Naive thymus-derived CD4-positive, alpha-beta T cell (primary cell): ENCODE measurements at regions of chrX and their contacts with region 1.

Region 1: DNA sequence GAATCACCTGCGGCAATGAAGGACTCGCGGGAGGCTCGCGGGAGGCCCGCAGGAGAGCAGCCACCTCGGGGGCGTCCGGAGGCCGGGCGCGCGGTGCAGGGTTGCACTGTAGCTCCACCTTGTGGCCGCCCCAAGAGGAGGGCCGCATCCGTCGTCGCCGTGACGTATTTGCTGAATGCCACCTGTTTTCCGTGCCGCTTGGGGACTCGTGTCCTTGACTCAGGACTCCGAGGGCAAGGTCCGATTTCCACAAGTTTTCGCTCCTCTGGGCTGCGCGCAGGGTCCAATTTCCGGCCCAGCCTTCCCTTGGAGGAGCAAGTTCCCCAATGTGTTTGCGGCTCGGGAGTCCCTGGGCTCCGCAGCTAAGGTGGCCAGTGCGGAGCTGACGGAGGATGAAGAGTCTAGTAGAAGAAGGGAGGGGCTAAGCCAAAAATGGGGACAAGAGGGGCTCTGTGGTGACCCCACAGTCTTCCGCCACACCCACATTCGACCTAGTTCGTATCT is 10.7 kb upstream of the DLG3 start:
- DNase-seq: peak; percentile 49 to 77 (median 73)
- ATAC-seq: peak; percentile 95
- H3K4me3 ChIP-seq: peak overlapping the region; percentile 79
- H3K4me3 Mint-ChIP-seq: peak overlapping the region; percentile 84 to 94 (median 90)
- H3K27ac ChIP-seq: peak overlapping the region; percentile 41
- H3K27ac Mint-ChIP-seq: peak overlapping the region; percentile 71 to 94 (median 89)
- H3K4me1 ChIP-seq: peaks cover 0 to 3% of the 10 kb centered on the region in 2 donors
- H3K4me1 Mint-ChIP-seq: peaks cover 0 to 24% (median 9%) of the 10 kb centered on the region in 7 donors
- H3K27me3 ChIP-seq: no peaks in the 10 kb centered on the region
- H3K27me3 Mint-ChIP-seq: peaks cover 0 to 18% (median 8%) of the 10 kb centered on the region in 5 donors

Region 2: DNA sequence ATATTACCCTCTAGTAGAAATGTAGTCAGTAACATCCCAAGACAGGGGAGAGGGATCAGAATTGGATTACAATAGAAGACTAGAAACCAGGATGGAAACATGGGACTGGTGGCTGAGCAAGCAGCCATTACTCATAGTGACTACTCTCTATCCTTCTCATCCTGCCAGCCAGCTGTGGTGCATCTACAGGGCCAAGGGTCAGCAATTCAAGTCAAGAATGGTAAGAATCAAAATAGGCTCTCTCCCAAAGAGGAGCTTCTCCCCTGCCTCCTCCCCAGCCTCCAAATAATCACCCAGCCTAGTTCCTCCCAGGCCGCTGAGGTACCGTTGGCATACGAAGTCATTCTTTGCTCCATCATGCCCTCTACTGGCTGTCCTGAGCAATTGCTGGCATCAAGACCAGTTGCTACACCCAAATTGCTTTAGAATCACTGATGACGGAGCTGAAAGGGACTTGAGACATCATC is 403.6 kb before region 1 on chrX:
- CTCF ChIA-PET with region 1: no interaction called
- POLR2A ChIA-PET with region 1: no interaction called
- intact Hi-C with region 1: loop called (anchors 5 to 10 kb)
- DNase-seq: peak in 8 of 9 donors; percentile 7 to 53 (median 40)
- ATAC-seq: peak; percentile 80
- H3K4me3 ChIP-seq: no peak overlapping the region
- H3K4me3 Mint-ChIP-seq: peak overlapping the region in 1 of 10 donors; percentile 41
- H3K27ac ChIP-seq: no peak overlapping the region
- H3K27ac Mint-ChIP-seq: no peak overlapping the region
- H3K4me1 ChIP-seq: peaks cover 0 to 20% of the 10 kb centered on the region in 2 donors
- H3K4me1 Mint-ChIP-seq: peaks cover 11 to 40% (median 27%) of the 10 kb centered on the region in 7 donors
- H3K27me3 ChIP-seq: no peaks in the 10 kb centered on the region
- H3K27me3 Mint-ChIP-seq: no peaks in the 10 kb centered on the region

Region 3: GRCh38 chrX:70196961-70197805 is 236.7 kb before region 1 on chrX:
- CTCF ChIA-PET with region 1: interaction called, 5 read pairs
- POLR2A ChIA-PET with region 1: no interaction called
- intact Hi-C with region 1: loop called (anchors 1 kb)
- DNase-seq: peak; percentile 18 to 70 (median 52)
- ATAC-seq: peak; percentile 83
- H3K4me3 ChIP-seq: no peak overlapping the region
- H3K4me3 Mint-ChIP-seq: peak overlapping the region in 3 of 10 donors; percentile 1 to 38 (median 4)
- H3K27ac ChIP-seq: no peak overlapping the region
- H3K27ac Mint-ChIP-seq: no peak overlapping the region
- H3K4me1 ChIP-seq: no peaks in the 10 kb centered on the region
- H3K4me1 Mint-ChIP-seq: peaks cover 0 to 6% (median 4%) of the 10 kb centered on the region in 7 donors
- H3K27me3 ChIP-seq: no peaks in the 10 kb centered on the region
- H3K27me3 Mint-ChIP-seq: peaks cover 0 to 14% (median 0%) of the 10 kb centered on the region in 5 donors

Region 4: GRCh38 chrX:70289793-70290776 is 143.8 kb before region 1 on chrX and contains the starts of genes KIF4A and PDZD11:
- CTCF ChIA-PET with region 1: no interaction called
- POLR2A ChIA-PET with region 1: interaction called, 3 read pairs
- intact Hi-C with region 1: loop called (anchors 1 kb)
- DNase-seq: peak; percentile 47 to 86 (median 63)
- ATAC-seq: peak; percentile 99
- H3K4me3 ChIP-seq: peak within 1 kb of the TSS; percentile 89
- H3K4me3 Mint-ChIP-seq: peak within 1 kb of the TSS; percentile 84 to 93 (median 88)
- H3K27ac ChIP-seq: peak within 1 kb of the TSS; percentile 60
- H3K27ac Mint-ChIP-seq: peak within 1 kb of the TSS; percentile 36 to 92 (median 84)
- H3K4me1 ChIP-seq: peaks cover 5 to 9% of the 10 kb centered on the region in 2 donors
- H3K4me1 Mint-ChIP-seq: peaks cover 0 to 27% (median 15%) of the 10 kb centered on the region in 7 donors
- H3K27me3 ChIP-seq: no peaks in the 10 kb centered on the region
- H3K27me3 Mint-ChIP-seq: no peaks in the 10 kb centered on the region
- total RNA-seq, gene KIF4A: 0.20 to 26.5 (median 0.21) TPM in 4 of 5 experiments, not detected in the other
- total RNA-seq, gene PDZD11: 5.9 to 34.1 (median 10.8) TPM

Region 5: DNA sequence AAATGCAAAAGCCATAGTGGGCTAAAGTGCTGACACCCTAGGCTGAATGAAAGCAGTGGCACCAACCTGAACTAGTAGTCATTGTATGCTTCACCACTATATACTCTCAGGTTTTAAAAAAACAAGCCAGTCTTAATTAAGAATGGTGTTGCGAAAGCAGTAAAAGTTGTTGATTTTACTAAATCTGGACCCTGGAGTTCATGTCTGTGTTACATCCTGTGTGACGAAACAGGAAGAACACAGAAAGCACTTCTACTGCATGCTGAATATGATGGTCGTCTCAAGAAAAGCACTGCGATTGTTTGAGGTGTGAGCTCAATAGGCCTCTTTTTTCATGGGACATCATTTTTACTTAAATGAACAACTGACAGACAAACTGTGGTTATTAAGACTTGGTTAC is 35.0 kb before region 1 on chrX:
- CTCF ChIA-PET with region 1: interaction called, 4 read pairs
- POLR2A ChIA-PET with region 1: no interaction called
- intact Hi-C with region 1: loop called in 1 of 2 experiments (anchors 2 kb)
- DNase-seq: peak in 7 of 9 donors; percentile 33 to 69 (median 63)
- ATAC-seq: peak; percentile 95
- H3K4me3 ChIP-seq: no peak overlapping the region
- H3K4me3 Mint-ChIP-seq: peak overlapping the region in 8 of 10 donors; percentile 42 to 74 (median 59)
- H3K27ac ChIP-seq: peak overlapping the region; percentile 39
- H3K27ac Mint-ChIP-seq: peak overlapping the region; percentile 86 to 98 (median 92)
- H3K4me1 ChIP-seq: no peaks in the 10 kb centered on the region
- H3K4me1 Mint-ChIP-seq: peaks cover 0 to 14% (median 12%) of the 10 kb centered on the region in 7 donors
- H3K27me3 ChIP-seq: no peaks in the 10 kb centered on the region
- H3K27me3 Mint-ChIP-seq: no peaks in the 10 kb centered on the region